ENCODE measurements at regions of chrX and their contacts with region 1.

Region 1: DNA sequence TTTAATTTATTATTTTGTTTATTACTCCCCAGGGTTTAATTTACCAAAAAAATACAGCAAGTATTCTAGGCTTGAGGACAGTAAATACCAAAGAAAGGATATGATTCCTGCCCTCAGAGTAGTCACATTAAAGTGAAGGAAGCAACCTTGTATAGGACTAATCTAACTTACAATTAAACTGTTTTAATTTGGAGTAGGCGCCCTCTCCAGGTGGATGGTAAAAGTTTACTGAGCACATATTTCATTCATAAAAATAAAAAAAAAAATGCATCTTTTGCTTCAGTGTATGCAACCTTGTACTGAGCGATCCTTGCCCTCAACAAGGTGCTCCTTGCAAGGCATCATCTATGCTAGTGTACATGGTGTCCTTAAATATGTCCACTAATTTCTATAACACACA is 72.0 kb upstream of the MAGEB16 start:
- DNase-seq: peak in 1 of 6 donors; percentile 17
- ATAC-seq: peak in 3 of 4 donors; percentile 40 to 59 (median 50)
- H3K4me3 ChIP-seq: no peak overlapping the region
- H3K27ac ChIP-seq: no peak overlapping the region
- H3K4me1 ChIP-seq: no peaks in the 10 kb centered on the region
- H3K27me3 ChIP-seq: peaks cover 0 to 4% (median 0%) of the 10 kb centered on the region in 4 donors
- CTCF ChIP-seq: no peak

Region 2: DNA sequence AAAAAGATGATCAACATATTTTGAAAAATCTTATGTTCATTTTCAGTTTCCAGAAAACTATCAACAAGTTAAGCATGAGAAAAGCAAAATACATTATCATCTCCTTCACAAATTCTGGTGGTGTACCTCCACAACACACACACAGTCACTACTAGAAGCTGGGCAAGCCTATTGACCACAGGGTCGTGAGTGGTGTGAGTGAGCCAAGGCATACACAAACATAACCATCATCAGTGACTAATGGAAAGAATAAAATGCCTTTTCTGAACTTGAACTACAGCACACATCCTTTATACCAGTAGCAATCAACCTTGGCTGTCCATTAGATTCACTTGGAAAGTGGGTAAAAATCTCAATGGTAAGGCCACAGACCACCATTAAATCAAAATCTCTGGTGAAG is 603.4 kb before region 1 on chrX:
- intact Hi-C with region 1: no loop called
- DNase-seq: no peak
- ATAC-seq: no peak
- H3K4me3 ChIP-seq: no peak overlapping the region
- H3K27ac ChIP-seq: no peak overlapping the region
- H3K4me1 ChIP-seq: no peaks in the 10 kb centered on the region
- H3K27me3 ChIP-seq: no peaks in the 10 kb centered on the region
- CTCF ChIP-seq: no peak

Region 3: DNA sequence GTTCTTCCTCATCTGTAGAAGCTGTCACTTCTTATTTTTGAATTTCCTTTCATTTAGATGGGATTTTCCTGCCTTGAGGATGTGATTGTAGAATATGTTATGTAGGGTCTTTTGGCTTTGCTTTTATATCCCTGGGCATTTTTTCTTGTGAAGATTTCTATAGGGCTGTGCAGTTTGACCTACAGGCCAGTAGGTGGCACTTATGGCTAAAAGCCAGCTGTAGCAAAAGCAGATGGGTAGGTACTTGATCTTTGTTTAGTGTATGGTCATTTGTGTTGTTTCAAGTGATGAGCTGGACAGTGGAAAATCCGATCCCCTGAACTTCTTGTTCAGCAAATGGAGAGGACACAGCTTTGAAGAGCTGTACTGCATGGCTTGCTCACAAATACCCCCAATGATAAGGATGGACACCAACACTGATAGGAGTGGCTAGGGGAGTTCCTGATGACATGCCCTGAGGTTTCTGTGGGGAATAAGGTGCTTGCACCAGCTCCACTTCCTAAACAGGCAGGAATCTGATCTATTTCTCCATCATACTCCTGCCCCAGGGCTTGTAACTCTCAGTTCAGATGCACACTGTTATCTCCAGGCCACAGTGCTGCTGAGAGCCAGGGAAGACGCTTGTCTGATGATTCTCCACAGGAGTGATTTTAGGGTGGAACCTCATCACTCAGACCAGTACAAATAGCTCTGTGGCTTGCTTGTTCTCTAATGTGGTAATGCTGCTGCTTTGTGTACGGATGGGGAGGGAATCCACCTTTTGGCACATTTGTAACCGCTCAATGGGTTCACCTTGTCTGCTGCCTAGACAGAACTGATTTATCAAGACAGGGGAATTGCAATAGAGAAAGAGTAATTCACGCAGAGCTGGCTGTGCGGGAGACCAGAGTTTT is 345.1 kb before region 1 on chrX:
- intact Hi-C with region 1: loop called in 1 of 3 experiments (anchors 10 kb)
- DNase-seq: peak in 1 of 6 donors; percentile 28
- ATAC-seq: peak in 3 of 4 donors; percentile 66 to 84 (median 81)
- H3K4me3 ChIP-seq: no peak overlapping the region
- H3K27ac ChIP-seq: no peak overlapping the region
- H3K4me1 ChIP-seq: no peaks in the 10 kb centered on the region
- H3K27me3 ChIP-seq: peaks cover 0 to 4% (median 0%) of the 10 kb centered on the region in 4 donors
- CTCF ChIP-seq: peak; percentile 58 to 70 (median 68)